PC-9 (cell line): ENCODE measurements at regions of chr11 and their contacts with region 1.

Region 1: GRCh38 chr11:59787816-59788215 is 22.8 kb downstream of the MRPL16 start:
- DNase-seq: no peak
- H3K4me3 ChIP-seq: peak overlapping the region; percentile 21; the same call in 1 of the 2 replicates
- H3K27ac ChIP-seq: peak overlapping the region; percentile 79
- H3K4me1 ChIP-seq: peaks cover 37% of the 10 kb centered on the region
- H3K27me3 ChIP-seq: no peaks in the 10 kb centered on the region
- CTCF ChIP-seq: no peak

Region 2: GRCh38 chr11:59759900-59760299 is 27.9 kb before region 1 on chr11:
- CTCF ChIA-PET with region 1: no interaction called
- POLR2A ChIA-PET with region 1: interaction called, 15 read pairs
- intact Hi-C with region 1: loop called (anchors 1 kb)
- DNase-seq: no peak
- H3K4me3 ChIP-seq: no peak overlapping the region
- H3K27ac ChIP-seq: no peak overlapping the region
- H3K4me1 ChIP-seq: peaks cover 19% of the 10 kb centered on the region
- H3K27me3 ChIP-seq: no peaks in the 10 kb centered on the region
- CTCF ChIP-seq: no peak

Region 3: DNA sequence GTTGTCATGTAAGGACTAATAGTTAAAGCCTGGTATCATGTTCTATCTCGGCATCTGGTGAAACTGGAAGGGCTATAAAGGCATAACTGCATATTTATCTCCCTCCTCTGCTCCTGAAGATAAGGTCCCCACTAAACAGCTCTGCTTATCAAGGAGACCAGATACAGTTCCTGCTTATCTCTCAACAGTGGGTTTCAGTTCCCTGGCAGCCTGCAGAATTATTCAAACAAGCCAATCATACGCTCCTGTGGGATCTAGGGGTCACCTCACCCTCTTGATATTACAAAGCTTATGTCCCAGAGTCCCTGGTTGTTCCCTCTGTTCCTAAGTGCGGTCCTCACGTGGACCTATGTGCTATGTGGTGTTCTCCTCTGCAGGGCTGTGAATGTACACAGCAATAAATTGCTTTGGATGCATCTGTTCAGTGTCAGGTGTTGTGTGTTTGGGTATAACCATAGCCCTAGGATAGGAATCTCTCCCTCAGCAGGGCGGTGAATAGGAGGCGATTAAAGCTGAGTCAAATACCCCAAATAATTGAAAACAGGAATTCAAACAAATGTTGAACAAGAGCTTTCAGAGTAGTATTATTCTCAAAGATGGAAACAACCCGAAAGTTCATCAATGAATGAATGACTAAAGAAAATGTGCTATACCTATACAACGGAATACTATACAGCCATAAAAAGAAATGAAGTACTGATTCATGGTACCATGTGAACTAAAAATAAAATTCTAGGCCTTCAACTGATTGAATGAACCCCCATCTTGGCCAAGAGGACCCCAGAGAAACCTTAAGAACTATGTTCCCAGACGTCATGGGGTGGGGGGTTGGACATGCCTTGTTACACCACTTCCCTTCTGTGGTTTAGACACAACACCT is 172.9 kb after region 1 on chr11:
- CTCF ChIA-PET with region 1: no interaction called
- POLR2A ChIA-PET with region 1: no interaction called
- intact Hi-C with region 1: no loop called
- DNase-seq: no peak
- H3K4me3 ChIP-seq: no peak overlapping the region
- H3K27ac ChIP-seq: no peak overlapping the region
- H3K4me1 ChIP-seq: no peaks in the 10 kb centered on the region
- H3K27me3 ChIP-seq: no peaks in the 10 kb centered on the region
- CTCF ChIP-seq: no peak